Aorta (tissue), 5 donors: ENCODE measurements at regions of chr19 and their contacts with region 1.

Region 1: GRCh38 chr19:662962-663681 is at the start of gene RNF126:
- DNase-seq: peak; percentile 94 to 98
- ATAC-seq: peak; percentile 90
- H3K4me3 ChIP-seq: peak within 1 kb of the TSS; percentile 36 to 94
- H3K27ac ChIP-seq: peak within 1 kb of the TSS in 1 of 2 donors; percentile 65
- H3K4me1 ChIP-seq: no peaks in the 10 kb centered on the region
- H3K27me3 ChIP-seq: no peaks in the 10 kb centered on the region
- total RNA-seq, gene RNF126: 26.7 to 26.9 TPM

Region 2: DNA sequence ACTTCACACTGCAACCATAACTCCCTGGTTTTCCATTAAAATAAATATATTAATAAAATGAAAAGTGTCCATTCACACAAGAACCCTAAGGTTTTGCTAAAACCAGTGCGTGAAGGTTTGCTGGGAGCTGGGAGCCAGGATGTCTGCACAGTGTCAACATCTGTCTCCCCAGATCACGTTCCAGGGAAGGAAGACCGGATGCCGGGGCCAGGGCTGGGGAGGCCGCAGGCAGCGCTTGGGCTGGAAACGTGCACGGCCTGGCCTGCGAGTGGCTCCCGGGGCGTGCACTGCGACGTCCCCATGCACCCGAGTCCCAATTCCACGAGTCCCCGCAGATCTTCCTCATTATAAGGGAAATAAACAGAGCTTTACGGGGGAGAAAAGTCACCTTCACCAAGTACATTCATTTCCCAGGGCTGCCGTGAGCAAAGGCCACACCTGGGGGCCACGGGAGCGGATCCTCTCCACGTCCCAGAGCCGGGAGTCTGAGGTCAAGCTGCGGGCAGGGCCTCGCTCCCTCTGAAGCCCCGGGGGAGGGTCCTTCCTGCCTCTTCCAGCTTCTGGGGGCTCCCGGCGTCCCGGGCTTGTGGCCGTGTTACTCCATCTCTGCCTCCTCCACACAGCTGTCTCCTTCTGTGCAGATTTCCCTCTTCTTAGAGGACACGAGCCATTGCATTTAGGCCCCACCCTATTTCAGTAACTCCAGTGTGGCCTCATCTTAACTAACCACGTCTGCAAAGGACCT is 215.1 kb before region 1 on chr19:
- intact Hi-C with region 1: no loop called
- DNase-seq: peak in 1 of 2 donors; percentile 71
- ATAC-seq: peak; percentile 41
- H3K4me3 ChIP-seq: no peak overlapping the region
- H3K27ac ChIP-seq: no peak overlapping the region
- H3K4me1 ChIP-seq: no peaks in the 10 kb centered on the region
- H3K27me3 ChIP-seq: no peaks in the 10 kb centered on the region

Region 3: DNA sequence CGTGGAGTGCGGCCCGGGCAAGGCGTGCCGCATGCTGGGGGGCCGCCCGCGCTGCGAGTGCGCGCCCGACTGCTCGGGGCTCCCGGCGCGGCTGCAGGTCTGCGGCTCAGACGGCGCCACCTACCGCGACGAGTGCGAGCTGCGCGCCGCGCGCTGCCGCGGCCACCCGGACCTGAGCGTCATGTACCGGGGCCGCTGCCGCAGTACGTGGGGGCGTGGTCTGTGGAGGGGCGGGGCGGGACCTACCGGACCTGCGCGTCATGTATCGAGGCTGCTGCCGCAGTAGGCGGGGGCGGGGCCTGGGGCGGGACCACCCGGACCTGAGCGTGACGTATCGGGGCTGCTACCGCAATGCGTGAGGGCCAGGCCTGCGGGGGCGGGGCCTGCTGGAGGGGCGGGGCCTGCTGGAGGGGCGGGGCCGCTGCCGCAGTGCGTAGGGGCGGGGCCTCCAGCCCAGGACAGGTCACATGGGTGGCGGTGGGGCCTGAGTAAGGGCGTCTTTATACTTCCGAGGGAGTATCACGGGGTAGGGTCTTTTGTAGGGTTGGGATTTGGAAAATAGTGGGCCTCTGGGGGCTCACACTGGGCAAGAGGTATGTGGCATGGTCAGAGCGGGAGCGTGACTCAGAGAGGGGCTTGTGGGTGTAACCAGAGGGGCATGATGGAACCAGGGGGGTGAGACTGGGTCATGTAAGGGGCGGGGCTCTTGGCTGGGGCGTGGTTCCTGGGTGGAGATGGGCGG is 17.3 kb after region 1 on chr19:
- intact Hi-C with region 1: loop called in 1 of 2 experiments (anchors 2 kb)
- DNase-seq: peak; percentile 99 to 100
- ATAC-seq: peak; percentile 93
- H3K4me3 ChIP-seq: peak overlapping the region; percentile 60 to 73
- H3K27ac ChIP-seq: peak overlapping the region; percentile 51 to 52
- H3K4me1 ChIP-seq: no peaks in the 10 kb centered on the region
- H3K27me3 ChIP-seq: no peaks in the 10 kb centered on the region

Region 4: GRCh38 chr19:734716-735115 is 71.6 kb after region 1 on chr19:
- intact Hi-C with region 1: loop called (anchors 1 kb)
- DNase-seq: no peak
- ATAC-seq: no peak
- H3K4me3 ChIP-seq: no peak overlapping the region
- H3K27ac ChIP-seq: no peak overlapping the region
- H3K4me1 ChIP-seq: no peaks in the 10 kb centered on the region
- H3K27me3 ChIP-seq: no peaks in the 10 kb centered on the region

Region 5: DNA sequence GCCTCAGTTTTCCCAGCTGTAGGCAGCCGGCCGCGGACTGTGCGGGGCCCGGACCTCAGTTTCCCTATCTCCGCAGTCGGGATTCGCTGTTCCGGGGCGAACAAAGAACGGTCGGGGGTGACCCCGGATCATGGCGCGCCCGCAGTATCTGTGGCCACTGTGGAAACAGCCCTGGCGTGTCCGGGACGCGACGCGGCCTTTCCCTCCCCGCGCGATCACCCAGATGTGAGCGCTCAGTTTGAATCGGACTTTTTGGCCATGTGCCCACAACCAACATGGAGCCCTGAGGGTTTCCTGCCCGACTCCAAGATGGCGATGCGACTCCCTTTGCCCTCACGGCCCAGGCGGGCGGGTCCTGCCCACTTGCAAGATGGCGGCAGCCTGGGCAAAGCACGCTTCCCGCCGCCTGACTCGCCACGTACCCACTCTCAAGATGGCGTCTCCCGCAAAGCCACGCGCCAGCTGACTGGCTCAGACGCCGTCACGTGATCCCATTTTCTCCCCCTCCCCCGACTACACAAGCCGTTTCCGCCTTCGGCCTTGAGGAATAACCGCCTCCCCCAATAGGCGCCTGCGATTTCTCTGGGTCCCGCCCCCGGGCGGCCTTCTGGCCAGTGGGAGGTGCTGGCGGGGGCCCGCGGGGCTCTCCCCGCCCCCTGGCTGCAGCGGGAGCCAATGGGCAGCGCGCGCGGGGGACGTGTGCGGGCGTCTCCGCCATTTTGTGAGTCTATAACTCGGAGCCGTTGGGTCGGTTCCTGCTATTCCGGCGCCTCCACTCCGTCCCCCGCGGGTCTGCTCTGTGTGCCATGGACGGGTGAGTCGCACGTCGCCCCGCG is 133.8 kb after region 1 on chr19 and contains the start of gene PTBP1:
- intact Hi-C with region 1: loop called in 1 of 2 experiments (anchors 5 kb)
- DNase-seq: peak; percentile 100
- ATAC-seq: peak; percentile 95
- H3K4me3 ChIP-seq: peak within 1 kb of the TSS; percentile 91 to 96
- H3K27ac ChIP-seq: peak within 1 kb of the TSS in 1 of 2 donors; percentile 79
- H3K4me1 ChIP-seq: peaks cover 3% of the 10 kb centered on the region in 2 donors
- H3K27me3 ChIP-seq: no peaks in the 10 kb centered on the region
- total RNA-seq, gene PTBP1: 192 to 218 TPM